Adrenal gland (tissue), 19 donors: ENCODE measurements at regions of chr14 and their contacts with region 1.

Region 1: GRCh38 chr14:57871459-57872080 is 5.7 kb upstream of the SLC35F4 start:
- DNase-seq: peak in 5 of 7 donors; percentile 24 to 51 (median 37)
- H3K4me3 ChIP-seq: no peak overlapping the region
- H3K27ac ChIP-seq: no peak overlapping the region
- H3K4me1 ChIP-seq: no peaks in the 10 kb centered on the region
- H3K27me3 ChIP-seq: peaks cover 27% of the 10 kb centered on the region
- CTCF ChIP-seq: peak; percentile 46 to 59 (median 56)
- POLR2A ChIP-seq: no peak

Region 2: GRCh38 chr14:57692671-57693070 is 178.9 kb before region 1 on chr14:
- intact Hi-C with region 1: loop called in 1 of 2 experiments (anchors 10 kb)
- DNase-seq: no peak
- H3K4me3 ChIP-seq: no peak overlapping the region
- H3K27ac ChIP-seq: no peak overlapping the region
- H3K4me1 ChIP-seq: no peaks in the 10 kb centered on the region
- H3K27me3 ChIP-seq: no peaks in the 10 kb centered on the region
- CTCF ChIP-seq: peak; percentile 17 to 57 (median 50)
- POLR2A ChIP-seq: no peak

Region 3: DNA sequence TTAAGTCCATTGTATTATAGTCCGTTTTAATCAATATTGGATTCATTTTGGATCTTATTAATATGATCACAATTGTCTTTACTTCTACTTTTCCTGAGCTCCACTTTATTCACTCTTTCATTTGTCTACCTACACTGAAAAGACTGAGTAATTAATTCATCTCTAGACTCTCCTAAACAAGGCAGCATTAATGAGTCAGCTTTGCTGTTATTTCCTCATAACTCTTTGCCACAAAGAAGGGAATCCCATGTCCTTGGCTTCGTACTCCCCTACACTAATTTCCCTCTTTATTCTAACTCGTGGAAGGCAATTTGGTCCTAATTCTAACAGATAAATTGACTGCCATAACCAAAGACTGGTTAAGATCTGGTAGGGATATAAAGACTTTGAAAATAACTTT is 188.5 kb after region 1 on chr14:
- intact Hi-C with region 1: loop called in 1 of 2 experiments (anchors 10 kb)
- DNase-seq: no peak
- H3K4me3 ChIP-seq: no peak overlapping the region
- H3K27ac ChIP-seq: no peak overlapping the region
- H3K4me1 ChIP-seq: no peaks in the 10 kb centered on the region
- H3K27me3 ChIP-seq: no peaks in the 10 kb centered on the region
- CTCF ChIP-seq: no peak
- POLR2A ChIP-seq: no peak